Panc1 (cell line): ENCODE measurements at regions of chr2 and their contacts with region 1.

Region 1: DNA sequence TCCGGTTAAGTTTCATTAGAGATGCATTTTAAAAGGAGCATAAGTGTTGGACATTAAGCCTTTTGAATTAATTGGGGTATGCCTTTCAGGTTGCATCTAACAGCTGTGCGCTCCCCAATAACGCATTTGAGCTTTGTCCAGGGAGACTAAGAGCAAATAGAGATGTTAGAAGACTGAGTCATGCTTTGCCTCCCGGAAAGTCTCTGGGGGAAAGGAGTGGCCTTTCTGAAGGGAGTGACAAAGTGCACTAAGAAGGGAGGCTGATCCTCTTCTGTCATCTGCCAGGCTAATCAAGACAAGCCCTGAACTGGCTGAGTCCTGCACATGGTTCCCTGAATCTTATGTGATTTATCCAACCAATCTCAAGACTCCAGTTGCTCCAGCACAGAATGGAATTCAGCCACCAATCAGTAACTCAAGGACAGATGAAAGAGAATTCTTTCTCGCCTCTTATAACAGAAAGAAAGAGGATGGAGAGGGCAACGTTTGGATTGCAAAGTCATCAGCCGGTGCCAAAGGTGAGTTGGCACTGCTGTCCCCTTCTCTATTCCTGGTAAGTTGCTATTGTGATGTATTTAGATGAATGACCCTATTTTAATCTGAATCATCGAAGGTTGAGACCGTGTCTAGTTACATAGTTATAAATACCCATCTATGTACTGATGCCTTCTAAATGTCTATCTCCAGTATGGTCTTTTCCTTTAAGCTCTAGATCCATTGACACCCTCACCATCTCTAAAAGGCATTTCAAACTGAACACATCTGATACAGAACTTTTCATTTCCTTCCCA is 12.1 kb downstream of the TTL start:
- DNase-seq: no peak
- ATAC-seq: peak; percentile 45; the same call in 1 of the 2 replicates
- H3K4me3 ChIP-seq: no peak overlapping the region
- H3K27ac ChIP-seq: no peak overlapping the region
- H3K4me1 ChIP-seq: no peaks in the 10 kb centered on the region
- H3K27me3 ChIP-seq: no peaks in the 10 kb centered on the region
- CTCF ChIP-seq: no peak

Region 2: DNA sequence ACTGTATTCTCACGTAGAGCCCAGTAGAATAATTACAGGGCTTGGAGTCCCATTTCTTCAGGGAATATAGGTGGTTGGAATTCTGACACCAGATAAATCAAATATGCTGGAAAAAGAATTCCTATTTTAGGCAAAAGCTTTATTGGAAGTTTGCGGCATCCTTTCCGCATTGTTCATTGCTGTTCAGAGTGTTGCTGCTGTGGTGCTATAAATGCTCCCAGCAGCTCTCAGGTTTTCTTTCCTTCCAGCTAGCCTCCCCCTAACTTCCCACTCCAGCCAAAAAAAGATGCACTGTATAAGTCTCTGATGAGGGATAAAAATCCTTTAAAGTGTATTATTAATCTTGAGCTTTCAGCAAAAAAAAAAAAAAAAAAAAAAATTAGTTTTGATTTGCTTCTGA is 22.7 kb after region 1 on chr2:
- CTCF ChIA-PET with region 1: no interaction called
- POLR2A ChIA-PET with region 1: interaction called, 10 read pairs
- in situ Hi-C with region 1: no loop called
- intact Hi-C with region 1: no loop called
- DNase-seq: no peak
- ATAC-seq: no peak
- H3K4me3 ChIP-seq: no peak overlapping the region
- H3K27ac ChIP-seq: no peak overlapping the region
- H3K4me1 ChIP-seq: no peaks in the 10 kb centered on the region
- H3K27me3 ChIP-seq: no peaks in the 10 kb centered on the region
- CTCF ChIP-seq: no peak

Region 3: DNA sequence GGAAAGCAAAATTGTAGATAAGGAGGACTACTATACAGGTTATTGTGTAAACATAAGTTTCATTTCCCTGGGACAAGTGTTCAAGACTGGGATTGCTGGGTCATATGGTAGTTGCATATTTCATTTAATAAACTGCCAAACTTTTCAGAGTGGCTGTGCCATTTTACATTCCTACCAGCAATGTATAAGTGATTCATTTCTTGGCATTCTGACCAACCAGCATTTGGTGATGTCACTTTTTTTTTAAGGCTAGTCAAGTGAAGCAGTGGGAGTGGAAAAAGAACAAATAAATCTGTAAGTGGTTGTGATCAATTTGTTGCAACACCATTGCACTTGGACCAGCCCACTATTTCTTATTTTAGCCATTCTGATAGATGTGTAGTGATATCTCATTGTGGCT is 85.2 kb after region 1 on chr2:
- CTCF ChIA-PET with region 1: no interaction called
- POLR2A ChIA-PET with region 1: interaction called, 12 read pairs
- in situ Hi-C with region 1: no loop called
- intact Hi-C with region 1: no loop called
- DNase-seq: peak; percentile 32
- ATAC-seq: no peak
- H3K4me3 ChIP-seq: no peak overlapping the region
- H3K27ac ChIP-seq: no peak overlapping the region
- H3K4me1 ChIP-seq: peaks cover 14% of the 10 kb centered on the region; the same call in 1 of the 2 replicates
- H3K27me3 ChIP-seq: no peaks in the 10 kb centered on the region
- CTCF ChIP-seq: no peak

Region 4: DNA sequence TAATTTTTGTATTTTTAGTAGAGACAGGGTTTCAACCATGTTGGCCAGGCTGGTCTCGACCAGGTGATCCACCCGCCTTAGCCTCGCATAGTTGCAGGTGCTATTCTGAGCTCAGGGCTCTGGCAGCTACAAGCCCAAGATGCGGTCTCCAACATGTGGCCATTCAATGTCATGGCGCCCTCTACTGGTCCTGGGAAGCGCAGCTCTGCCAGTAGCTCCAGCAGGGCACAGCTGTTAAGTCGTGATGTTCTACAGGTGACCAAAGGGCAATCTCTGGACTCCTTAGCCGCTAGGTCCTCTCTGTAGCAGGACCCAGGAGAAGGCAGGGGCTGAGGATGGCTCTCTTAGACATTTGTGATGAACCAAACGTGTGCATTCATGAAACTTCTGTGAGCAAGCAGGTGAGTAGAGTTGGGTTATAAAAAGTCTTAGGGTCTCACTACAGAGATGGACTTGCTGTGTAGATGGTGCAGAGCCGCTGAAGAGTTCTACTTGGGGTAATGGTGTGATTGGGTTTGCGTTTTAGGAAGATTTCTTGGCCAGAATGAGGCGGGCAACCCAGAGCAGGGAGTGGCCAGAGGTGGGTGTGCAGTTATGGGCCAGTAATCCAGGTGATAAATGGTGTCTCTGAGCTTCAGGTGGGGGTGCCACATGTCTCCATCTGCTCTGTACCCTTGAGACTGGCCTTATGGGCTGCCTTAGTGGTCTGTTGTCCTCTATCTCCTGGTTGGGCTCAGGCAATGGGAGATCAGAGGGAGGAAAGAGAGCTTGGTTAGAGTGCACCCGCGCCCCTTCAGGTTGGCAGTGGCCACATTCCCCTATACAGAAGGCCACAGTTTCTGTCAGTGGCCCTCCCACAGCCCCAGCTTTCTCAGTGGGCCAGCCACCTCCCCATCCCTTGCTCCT is 448.0 kb after region 1 on chr2:
- CTCF ChIA-PET with region 1: no interaction called
- POLR2A ChIA-PET with region 1: no interaction called
- in situ Hi-C with region 1: no loop called
- intact Hi-C with region 1: no loop called
- DNase-seq: peak; percentile 51
- ATAC-seq: peak; percentile 96
- H3K4me3 ChIP-seq: no peak overlapping the region
- H3K27ac ChIP-seq: no peak overlapping the region
- H3K4me1 ChIP-seq: no peaks in the 10 kb centered on the region
- H3K27me3 ChIP-seq: peaks cover 6% of the 10 kb centered on the region; the same call in 1 of the 2 replicates
- CTCF ChIP-seq: peak; percentile 92